ENCODE measurements at regions of chr2 and their contacts with region 1.

Region 1: GRCh38 chr2:101831351-101831865 is 133.9 kb downstream of the MAP4K4 start:
- DNase-seq: peak; percentile 51
- ATAC-seq: peak; percentile 97
- H3K4me3 ChIP-seq: no peak overlapping the region
- H3K27ac ChIP-seq: no peak overlapping the region; the same call in 1 of the 2 replicates
- H3K4me1 ChIP-seq: peaks cover 3% of the 10 kb centered on the region; the same call in 1 of the 2 replicates
- H3K27me3 ChIP-seq: no peaks in the 10 kb centered on the region
- CTCF ChIP-seq: peak; percentile 87

Region 2: DNA sequence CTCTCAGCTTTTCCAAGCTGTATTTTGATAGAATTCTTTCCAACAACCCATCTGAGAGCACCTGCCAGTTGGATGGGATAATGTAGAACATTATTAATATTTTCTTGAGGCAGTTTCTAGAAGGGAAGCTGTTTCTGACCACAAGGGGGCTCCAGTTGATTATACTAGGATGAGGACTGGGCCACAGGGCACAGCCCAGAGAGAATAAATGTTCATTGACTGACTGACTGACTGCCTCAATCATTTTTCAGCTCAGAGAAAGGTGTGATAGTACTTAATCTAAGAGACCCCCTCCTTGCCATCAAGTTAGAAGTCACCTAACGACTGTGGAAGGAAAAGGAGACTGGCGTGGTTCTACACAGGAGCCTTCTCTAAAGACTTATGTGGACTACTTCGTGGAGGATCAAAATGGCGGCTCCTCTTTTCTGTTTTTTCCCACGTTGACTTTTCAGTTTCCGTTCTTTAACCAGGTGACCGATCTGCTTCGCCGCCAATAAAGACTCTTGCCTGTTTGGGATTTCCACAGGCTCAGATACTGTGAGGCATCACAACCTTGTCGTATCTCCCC is 412.2 kb before region 1 on chr2:
- CTCF ChIA-PET with region 1: interaction called, 4 read pairs
- POLR2A ChIA-PET with region 1: no interaction called
- in situ Hi-C with region 1: no loop called
- intact Hi-C with region 1: loop called (anchors 10 kb)
- DNase-seq: peak; percentile 33
- ATAC-seq: peak; percentile 94
- H3K4me3 ChIP-seq: no peak overlapping the region
- H3K27ac ChIP-seq: no peak overlapping the region
- H3K4me1 ChIP-seq: no peaks in the 10 kb centered on the region
- H3K27me3 ChIP-seq: no peaks in the 10 kb centered on the region
- CTCF ChIP-seq: peak; percentile 82

Region 3: GRCh38 chr2:101446869-101447268 is 384.5 kb before region 1 on chr2:
- CTCF ChIA-PET with region 1: no interaction called
- POLR2A ChIA-PET with region 1: no interaction called
- in situ Hi-C with region 1: no loop called
- intact Hi-C with region 1: no loop called
- DNase-seq: no peak
- ATAC-seq: no peak
- H3K4me3 ChIP-seq: no peak overlapping the region
- H3K27ac ChIP-seq: no peak overlapping the region
- H3K4me1 ChIP-seq: no peaks in the 10 kb centered on the region
- H3K27me3 ChIP-seq: no peaks in the 10 kb centered on the region
- CTCF ChIP-seq: no peak

Region 4: DNA sequence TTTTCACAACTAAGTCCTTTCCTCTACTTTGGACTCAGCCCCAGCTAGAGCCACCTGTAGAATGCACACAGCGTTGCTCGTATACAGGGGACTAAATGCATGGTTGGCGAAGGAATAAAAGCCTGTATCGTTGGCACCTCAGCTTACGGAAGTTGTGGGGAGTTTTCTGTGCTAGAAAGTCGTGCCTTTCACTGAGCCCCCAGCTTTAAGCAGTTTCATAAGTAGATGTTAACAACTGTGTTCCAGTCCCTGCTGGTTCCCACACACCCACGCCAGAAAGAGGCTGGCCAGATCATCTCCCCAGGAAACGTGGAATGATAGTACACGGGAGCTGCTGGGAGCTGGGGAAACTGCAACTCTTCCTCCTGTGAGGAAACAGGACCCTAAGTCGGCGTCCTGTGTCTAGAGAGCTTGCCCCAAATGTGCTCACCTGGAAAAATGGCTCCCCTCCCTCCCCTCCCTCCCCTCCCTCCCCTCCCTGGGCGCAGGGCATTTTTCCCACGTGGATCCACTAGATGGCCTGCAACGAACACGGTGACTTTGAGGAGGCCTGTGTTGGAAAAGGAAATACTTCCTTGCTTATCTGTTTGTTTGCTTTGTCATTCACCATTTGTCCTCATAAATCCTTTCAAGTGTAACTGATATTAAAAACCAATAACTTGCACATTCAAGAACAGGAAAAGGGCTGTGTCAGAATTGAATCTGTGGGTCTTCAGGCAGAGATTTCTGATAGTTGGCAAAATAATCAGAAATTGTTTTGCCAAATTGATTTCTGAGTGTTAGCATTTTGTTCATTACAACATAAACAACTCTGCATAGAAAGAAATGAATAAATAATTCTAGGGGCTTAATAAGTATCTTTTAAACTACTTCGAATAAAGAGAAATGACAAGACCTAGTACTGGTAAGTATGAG is 312.6 kb before region 1 on chr2:
- CTCF ChIA-PET with region 1: interaction called, 8 read pairs
- POLR2A ChIA-PET with region 1: no interaction called
- in situ Hi-C with region 1: no loop called
- intact Hi-C with region 1: loop called (anchors 10 kb)
- DNase-seq: no peak
- ATAC-seq: peak; percentile 84
- H3K4me3 ChIP-seq: peak overlapping the region in 1 of 2 experiments; percentile 10; a peak in 1 of 4 replicates
- H3K27ac ChIP-seq: no peak overlapping the region
- H3K4me1 ChIP-seq: peaks cover 7% of the 10 kb centered on the region; the same call in 1 of the 2 replicates
- H3K27me3 ChIP-seq: no peaks in the 10 kb centered on the region
- CTCF ChIP-seq: peak; percentile 82

Region 5: GRCh38 chr2:101770726-101771125 is 60.7 kb before region 1 on chr2:
- CTCF ChIA-PET with region 1: interaction called, 13 read pairs
- POLR2A ChIA-PET with region 1: no interaction called
- in situ Hi-C with region 1: no loop called
- intact Hi-C with region 1: no loop called
- DNase-seq: no peak
- ATAC-seq: peak; percentile 80
- H3K4me3 ChIP-seq: no peak overlapping the region
- H3K27ac ChIP-seq: no peak overlapping the region
- H3K4me1 ChIP-seq: peaks cover 31% of the 10 kb centered on the region
- H3K27me3 ChIP-seq: no peaks in the 10 kb centered on the region
- CTCF ChIP-seq: peak; percentile 78

Region 6: GRCh38 chr2:101793277-101793969 is 38.0 kb before region 1 on chr2:
- CTCF ChIA-PET with region 1: no interaction called
- POLR2A ChIA-PET with region 1: no interaction called
- in situ Hi-C with region 1: no loop called
- intact Hi-C with region 1: no loop called
- DNase-seq: no peak
- ATAC-seq: no peak
- H3K4me3 ChIP-seq: no peak overlapping the region
- H3K27ac ChIP-seq: no peak overlapping the region
- H3K4me1 ChIP-seq: no peaks in the 10 kb centered on the region
- H3K27me3 ChIP-seq: no peaks in the 10 kb centered on the region
- CTCF ChIP-seq: peak; percentile 19; the same call in 1 of the 2 replicates

Region 7: GRCh38 chr2:101847661-101848339 is 16.4 kb after region 1 on chr2:
- CTCF ChIA-PET with region 1: no interaction called
- POLR2A ChIA-PET with region 1: no interaction called
- in situ Hi-C with region 1: no loop called
- intact Hi-C with region 1: no loop called
- DNase-seq: no peak
- ATAC-seq: no peak
- H3K4me3 ChIP-seq: no peak overlapping the region
- H3K27ac ChIP-seq: no peak overlapping the region
- H3K4me1 ChIP-seq: no peaks in the 10 kb centered on the region
- H3K27me3 ChIP-seq: no peaks in the 10 kb centered on the region
- CTCF ChIP-seq: no peak